ENCODE measurements at regions of chr1 and their contacts with region 1.

Region 1: DNA sequence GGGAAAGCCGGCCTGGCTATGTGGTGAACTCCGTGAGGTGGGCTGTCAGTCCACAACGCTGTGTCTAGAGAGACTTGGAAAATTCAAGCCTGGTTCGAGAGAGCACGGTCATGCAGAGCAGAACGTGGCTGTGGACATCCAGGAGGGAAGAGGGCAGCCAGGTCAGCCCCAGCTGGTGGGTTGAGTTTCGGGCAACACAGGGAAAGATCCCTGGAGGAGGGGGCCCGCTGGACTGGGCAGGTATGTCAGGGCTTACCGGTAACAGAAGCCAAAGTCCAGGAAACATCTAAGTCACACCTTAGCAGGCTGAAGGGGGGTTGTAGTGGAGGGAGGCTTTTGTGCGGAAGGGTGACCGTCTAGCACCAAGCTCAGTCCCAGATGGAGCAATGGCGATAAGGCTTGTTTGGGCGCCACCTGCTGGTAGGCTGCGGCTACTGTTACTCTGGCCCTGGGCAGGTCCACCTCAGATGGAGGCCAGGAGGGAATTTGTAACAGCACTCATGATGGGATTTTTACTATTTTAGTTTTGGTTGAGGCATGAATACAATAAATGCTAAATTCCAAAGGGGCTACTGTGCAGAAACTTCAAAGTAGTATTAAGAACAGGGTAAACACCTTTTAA is 143.3 kb upstream of the ZNF644 start:
- DNase-seq: peak; percentile 85
- H3K4me3 Mint-ChIP-seq: no peak overlapping the region
- H3K27ac Mint-ChIP-seq: no peak overlapping the region
- H3K4me1 Mint-ChIP-seq: no peaks in the 10 kb centered on the region
- H3K27me3 Mint-ChIP-seq: no peaks in the 10 kb centered on the region

Region 2: DNA sequence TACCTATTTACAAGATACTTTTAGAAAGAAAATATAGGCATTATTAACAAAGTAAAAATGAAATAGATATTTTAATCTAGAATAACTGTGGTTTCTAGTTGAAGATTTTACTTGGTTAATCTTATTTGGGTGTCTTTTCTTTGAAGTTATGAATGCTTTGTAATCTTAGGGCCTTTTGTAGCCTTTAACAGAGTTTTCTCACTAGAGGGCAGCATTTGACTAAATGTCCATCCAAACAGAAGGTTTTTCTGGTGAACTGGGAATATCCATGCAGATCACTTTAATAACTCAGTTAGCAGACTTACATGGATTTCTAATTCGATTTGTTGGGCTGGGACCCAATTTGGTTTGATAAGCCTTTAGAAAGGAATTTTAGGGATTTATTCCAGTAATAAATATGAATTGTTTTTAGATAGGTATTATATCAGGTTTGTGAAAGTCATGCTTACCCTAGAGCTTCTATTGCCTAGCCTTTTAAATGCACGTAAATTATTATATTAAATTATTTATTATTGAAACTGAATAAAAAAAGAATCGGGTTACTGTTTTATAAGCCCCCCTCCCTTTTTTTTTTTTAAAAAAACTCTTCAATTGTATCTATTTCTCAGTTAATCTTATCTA is 1050.5 kb before region 1 on chr1:
- CTCF ChIA-PET with region 1: no interaction called
- intact Hi-C with region 1: loop called (anchors 1 kb)
- DNase-seq: no peak
- H3K4me3 Mint-ChIP-seq: no peak overlapping the region
- H3K27ac Mint-ChIP-seq: no peak overlapping the region
- H3K4me1 Mint-ChIP-seq: no peaks in the 10 kb centered on the region
- H3K27me3 Mint-ChIP-seq: peaks cover 27% of the 10 kb centered on the region

Region 3: GRCh38 chr1:90579212-90579802 is 585.8 kb before region 1 on chr1:
- CTCF ChIA-PET with region 1: interaction called, 14 read pairs
- intact Hi-C with region 1: loop called (anchors 1 kb)
- DNase-seq: no peak
- H3K4me3 Mint-ChIP-seq: no peak overlapping the region
- H3K27ac Mint-ChIP-seq: no peak overlapping the region
- H3K4me1 Mint-ChIP-seq: no peaks in the 10 kb centered on the region
- H3K27me3 Mint-ChIP-seq: peaks cover 6% of the 10 kb centered on the region

Region 4: DNA sequence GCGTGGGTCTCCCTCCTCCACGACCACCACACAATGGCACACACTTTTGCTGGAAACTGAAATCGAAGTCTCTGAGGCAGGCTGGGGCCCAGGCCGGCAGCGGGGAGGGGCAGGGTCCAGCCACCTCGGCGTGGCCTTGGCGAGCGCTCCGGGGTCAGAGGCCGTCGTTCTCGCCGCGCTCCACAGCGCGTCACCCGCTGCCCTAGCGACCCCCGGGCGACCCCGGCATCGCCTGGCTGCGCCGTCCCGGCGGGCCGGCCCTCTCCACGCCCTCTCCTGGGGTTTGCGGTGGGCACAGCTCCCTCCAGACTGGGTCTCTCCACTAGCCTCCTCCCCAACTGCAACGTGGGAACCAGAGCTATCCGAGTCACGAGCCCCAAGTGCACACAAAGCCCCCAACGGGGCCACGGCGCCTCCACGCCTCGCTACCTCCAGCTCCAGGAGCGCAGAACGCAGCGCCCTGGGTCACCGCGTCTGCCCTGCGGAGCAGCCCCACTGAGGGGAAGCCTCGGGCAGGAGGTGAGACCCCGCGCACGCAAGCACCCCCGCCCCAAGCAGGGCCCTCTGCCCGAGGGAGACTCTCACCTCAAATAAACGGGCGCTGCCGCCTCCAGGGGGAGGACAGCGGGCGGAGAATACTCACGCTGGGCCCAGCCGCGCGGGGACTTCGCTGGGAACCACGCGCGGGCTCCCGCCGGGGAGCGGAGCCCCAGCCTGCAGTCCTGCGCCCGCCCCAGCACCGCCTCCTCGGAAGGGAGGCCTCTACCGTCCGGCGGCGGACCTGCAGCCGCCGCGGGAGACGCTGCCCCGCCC is 314.0 kb before region 1 on chr1:
- CTCF ChIA-PET with region 1: interaction called, 3 read pairs
- intact Hi-C with region 1: loop called (anchors 10 kb)
- DNase-seq: peak; percentile 79
- H3K4me3 Mint-ChIP-seq: peak overlapping the region; percentile 69
- H3K27ac Mint-ChIP-seq: no peak overlapping the region
- H3K4me1 Mint-ChIP-seq: peaks cover 12% of the 10 kb centered on the region
- H3K27me3 Mint-ChIP-seq: peaks cover 39% of the 10 kb centered on the region

Region 5: DNA sequence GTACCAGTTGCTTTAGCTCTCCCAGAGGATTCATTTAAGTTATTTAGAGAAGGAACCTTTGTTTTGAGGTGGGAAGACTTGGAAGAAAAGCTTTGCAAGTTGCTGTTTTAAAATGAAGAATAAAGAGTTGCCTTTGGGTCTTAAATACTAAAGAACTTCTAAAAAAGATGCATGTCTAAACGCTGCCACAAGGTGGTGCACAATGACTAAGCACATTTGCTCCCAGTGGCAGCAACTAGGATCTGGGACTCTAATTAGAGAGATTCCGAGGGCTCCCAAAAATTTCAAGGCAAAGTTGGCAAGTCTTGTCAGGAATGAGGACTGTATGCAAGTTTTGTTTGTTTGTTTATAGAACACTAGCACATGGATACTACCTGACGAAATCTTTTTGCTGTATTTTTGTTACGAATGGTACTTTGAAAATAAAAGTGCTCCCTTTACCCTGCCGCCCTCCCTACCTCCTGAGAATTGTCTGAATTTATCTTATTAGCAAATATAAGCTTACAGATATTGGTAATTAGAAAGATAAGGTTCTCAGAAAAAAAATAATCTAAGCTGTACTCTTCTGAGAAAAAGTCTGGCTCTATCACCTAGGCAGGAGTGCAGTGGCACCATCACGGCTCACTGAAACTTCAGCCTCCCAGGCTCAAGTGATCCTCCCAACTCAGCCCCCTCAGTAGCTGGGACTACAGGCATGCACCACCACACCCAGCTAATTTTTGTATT is 117.7 kb after region 1 on chr1:
- CTCF ChIA-PET with region 1: interaction called, 60 read pairs
- intact Hi-C with region 1: loop called (anchors 1 kb)
- DNase-seq: peak; percentile 65
- H3K4me3 Mint-ChIP-seq: no peak overlapping the region
- H3K27ac Mint-ChIP-seq: no peak overlapping the region
- H3K4me1 Mint-ChIP-seq: peaks cover 1% of the 10 kb centered on the region
- H3K27me3 Mint-ChIP-seq: peaks cover 6% of the 10 kb centered on the region

Region 6: GRCh38 chr1:91929250-91929649 is 764.1 kb after region 1 on chr1:
- CTCF ChIA-PET with region 1: interaction called, 3 read pairs
- intact Hi-C with region 1: loop called (anchors 5 kb)
- DNase-seq: no peak
- H3K4me3 Mint-ChIP-seq: no peak overlapping the region
- H3K27ac Mint-ChIP-seq: no peak overlapping the region
- H3K4me1 Mint-ChIP-seq: peaks cover 1% of the 10 kb centered on the region
- H3K27me3 Mint-ChIP-seq: no peaks in the 10 kb centered on the region

Measured in activated naive CD4-positive, alpha-beta T cell treated with anti-CD3 and anti-CD28 coated beads for 36 hours (primary cell).